ENCODE measurements at regions of chr21 and their contacts with region 1.

Region 1: GRCh38 chr21:36783612-36784383 is 84.9 kb downstream of the SIM2 start:
- DNase-seq: no peak

Region 2: DNA sequence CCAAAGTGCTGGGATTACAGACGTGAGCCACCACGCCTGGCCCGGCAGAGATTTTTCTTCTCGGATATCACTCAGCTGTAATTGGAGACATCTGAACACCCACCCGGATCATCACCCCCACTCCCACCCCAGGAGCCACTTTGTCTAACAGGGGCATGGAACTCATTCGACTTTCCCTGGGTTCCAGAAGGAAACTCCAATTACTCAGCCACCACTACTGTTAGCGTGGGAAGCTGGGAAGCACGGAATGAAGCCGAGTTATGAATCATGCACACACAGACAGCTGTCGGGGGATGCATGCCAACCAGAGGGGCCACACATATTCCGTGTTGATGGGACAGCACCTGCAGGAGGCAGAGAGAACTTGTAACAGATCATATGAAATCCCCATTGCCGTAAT is 97.4 kb after region 1 on chr21:
- in situ Hi-C with region 1: loop called (anchors 25 kb)
- DNase-seq: no peak

Region 3: DNA sequence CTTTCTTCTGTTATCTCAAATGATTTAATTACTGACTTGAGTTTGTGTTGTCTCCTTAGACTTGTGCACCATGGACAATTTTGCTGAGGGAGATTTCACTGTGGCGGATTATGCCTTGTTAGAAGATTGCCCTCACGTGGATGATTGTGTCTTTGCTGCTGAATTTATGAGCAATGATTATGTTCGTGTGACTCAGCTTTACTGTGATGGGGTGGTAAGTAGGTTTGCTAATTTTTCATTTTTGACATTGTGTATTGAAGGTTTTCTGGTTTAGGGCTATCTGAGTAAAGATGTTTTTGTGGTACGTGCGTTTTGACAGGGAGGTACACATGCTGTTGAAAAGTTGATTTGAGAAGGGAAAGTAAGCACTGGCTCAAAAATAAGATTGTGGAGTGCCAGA is 303.4 kb after region 1 on chr21:
- in situ Hi-C with region 1: no loop called
- DNase-seq: peak; percentile 68